ENCODE measurements at regions of chr6 and their contacts with region 1.

Region 1: GRCh38 chr6:166942393-166943168 is 13.8 kb downstream of the RNASET2 start:
- DNase-seq: no peak
- H3K4me3 ChIP-seq: no peak overlapping the region
- H3K27ac ChIP-seq: no peak overlapping the region
- H3K4me1 ChIP-seq: peaks cover 18% of the 10 kb centered on the region
- H3K27me3 ChIP-seq: no peaks in the 10 kb centered on the region
- CTCF ChIP-seq: no peak

Region 2: GRCh38 chr6:166877906-166878305 is 64.7 kb before region 1 on chr6:
- CTCF ChIA-PET with region 1: no interaction called
- POLR2A ChIA-PET with region 1: no interaction called
- intact Hi-C with region 1: loop called (anchors 1 kb)
- DNase-seq: peak; percentile 27 to 77
- H3K4me3 ChIP-seq: no peak overlapping the region
- H3K27ac ChIP-seq: 0 out of 2 replicates have a peak overlapping the region, but pooled peaks have one; percentile 32
- H3K4me1 ChIP-seq: peaks cover 16% of the 10 kb centered on the region
- H3K27me3 ChIP-seq: no peaks in the 10 kb centered on the region
- CTCF ChIP-seq: no peak

Region 3: GRCh38 chr6:166900130-166900708 is 42.4 kb before region 1 on chr6:
- CTCF ChIA-PET with region 1: no interaction called
- POLR2A ChIA-PET with region 1: no interaction called
- intact Hi-C with region 1: loop called (anchors 2 kb)
- DNase-seq: no peak
- H3K4me3 ChIP-seq: no peak overlapping the region
- H3K27ac ChIP-seq: no peak overlapping the region
- H3K4me1 ChIP-seq: peaks cover 8% of the 10 kb centered on the region
- H3K27me3 ChIP-seq: no peaks in the 10 kb centered on the region
- CTCF ChIP-seq: no peak

Region 4: GRCh38 chr6:166999145-166999883 is 56.7 kb after region 1 on chr6 and contains the start of gene CEP43:
- CTCF ChIA-PET with region 1: no interaction called
- POLR2A ChIA-PET with region 1: no interaction called
- intact Hi-C with region 1: loop called (anchors 5 kb)
- DNase-seq: peak; percentile 77 to 89
- H3K4me3 ChIP-seq: peak within 1 kb of the TSS; percentile 98
- H3K27ac ChIP-seq: no peak within 1 kb of the TSS
- H3K4me1 ChIP-seq: peaks cover 16% of the 10 kb centered on the region
- H3K27me3 ChIP-seq: no peaks in the 10 kb centered on the region
- CTCF ChIP-seq: no peak
- total RNA-seq, gene CEP43: 18.1 and 19.7 TPM in 2 replicates

Region 5: GRCh38 chr6:167255918-167256553 is 313.5 kb after region 1 on chr6:
- CTCF ChIA-PET with region 1: no interaction called
- POLR2A ChIA-PET with region 1: no interaction called
- intact Hi-C with region 1: no loop called
- DNase-seq: no peak
- H3K4me3 ChIP-seq: no peak overlapping the region
- H3K27ac ChIP-seq: no peak overlapping the region
- H3K4me1 ChIP-seq: no peaks in the 10 kb centered on the region
- H3K27me3 ChIP-seq: peaks cover 20% of the 10 kb centered on the region
- CTCF ChIP-seq: no peak; the same call in 1 of the 2 replicates